IMR-90 (cell line): ENCODE measurements at regions of chr2 and their contacts with region 1.

Region 1: DNA sequence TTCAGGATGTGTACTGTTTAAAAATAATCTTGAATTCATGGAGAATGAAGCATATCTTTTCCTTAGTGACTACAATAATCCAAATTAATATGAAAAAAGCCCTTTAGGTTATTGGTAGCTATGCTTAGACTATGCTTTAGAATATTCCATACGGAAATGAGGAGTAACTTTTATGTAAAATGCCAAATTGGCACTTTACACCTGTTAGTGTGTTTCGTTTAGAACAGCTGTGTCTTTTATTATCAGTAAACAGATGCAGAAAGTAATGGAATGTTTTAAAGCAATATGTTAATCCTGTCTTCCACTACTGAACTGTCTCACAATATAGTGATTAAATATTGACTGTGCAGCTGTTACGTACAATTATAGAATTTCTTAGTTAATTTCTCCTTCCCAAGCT is 129.6 kb downstream of the PMS1 start:
- DNase-seq: no peak
- ATAC-seq: no peak
- H3K4me3 ChIP-seq: no peak overlapping the region
- H3K27ac ChIP-seq: no peak overlapping the region
- H3K4me1 ChIP-seq: no peaks in the 10 kb centered on the region
- H3K27me3 ChIP-seq: no peaks in the 10 kb centered on the region
- CTCF ChIP-seq: no peak
- POLR2A ChIP-seq: no peak
- RAD21 ChIP-seq: no peak

Region 2: GRCh38 chr2:190031971-190032618 is 118.3 kb after region 1 on chr2:
- CTCF ChIA-PET with region 1: no interaction called
- POLR2A ChIA-PET with region 1: no interaction called
- dilution Hi-C with region 1: no loop called
- in situ Hi-C with region 1: no loop called
- intact Hi-C with region 1: loop called (anchors 10 kb)
- DNase-seq: no peak
- ATAC-seq: no peak
- H3K4me3 ChIP-seq: no peak overlapping the region
- H3K27ac ChIP-seq: no peak overlapping the region
- H3K4me1 ChIP-seq: no peaks in the 10 kb centered on the region; the same call in 1 of the 2 replicates
- H3K27me3 ChIP-seq: peaks cover 2% of the 10 kb centered on the region
- CTCF ChIP-seq: no peak
- POLR2A ChIP-seq: no peak
- RAD21 ChIP-seq: no peak

Region 3: DNA sequence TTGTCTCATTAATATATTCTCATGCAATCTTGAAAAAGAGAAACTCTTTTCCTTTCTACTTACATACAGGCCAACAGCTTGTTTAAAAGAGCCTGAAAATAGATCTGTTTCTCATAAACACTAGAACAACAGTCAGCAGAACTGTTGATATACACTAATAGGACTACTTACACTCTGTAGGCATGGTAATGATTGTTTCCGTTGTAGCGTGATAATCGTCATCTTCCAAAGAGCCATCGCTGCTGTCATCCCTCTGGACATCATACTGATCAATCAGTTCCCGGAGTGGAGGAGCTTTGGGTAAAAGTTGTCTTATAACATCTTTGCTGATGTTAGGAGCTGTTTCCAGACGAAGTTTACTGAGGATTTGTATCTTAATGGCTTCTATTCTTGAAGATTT is 148.2 kb after region 1 on chr2:
- CTCF ChIA-PET with region 1: no interaction called
- POLR2A ChIA-PET with region 1: no interaction called
- dilution Hi-C with region 1: no loop called
- in situ Hi-C with region 1: no loop called
- intact Hi-C with region 1: no loop called
- DNase-seq: no peak
- ATAC-seq: no peak
- H3K4me3 ChIP-seq: no peak overlapping the region
- H3K27ac ChIP-seq: no peak overlapping the region
- H3K4me1 ChIP-seq: no peaks in the 10 kb centered on the region
- H3K27me3 ChIP-seq: no peaks in the 10 kb centered on the region
- CTCF ChIP-seq: no peak
- POLR2A ChIP-seq: no peak
- RAD21 ChIP-seq: no peak